ENCODE measurements at regions of chr12 and their contacts with region 1.

Region 1: DNA sequence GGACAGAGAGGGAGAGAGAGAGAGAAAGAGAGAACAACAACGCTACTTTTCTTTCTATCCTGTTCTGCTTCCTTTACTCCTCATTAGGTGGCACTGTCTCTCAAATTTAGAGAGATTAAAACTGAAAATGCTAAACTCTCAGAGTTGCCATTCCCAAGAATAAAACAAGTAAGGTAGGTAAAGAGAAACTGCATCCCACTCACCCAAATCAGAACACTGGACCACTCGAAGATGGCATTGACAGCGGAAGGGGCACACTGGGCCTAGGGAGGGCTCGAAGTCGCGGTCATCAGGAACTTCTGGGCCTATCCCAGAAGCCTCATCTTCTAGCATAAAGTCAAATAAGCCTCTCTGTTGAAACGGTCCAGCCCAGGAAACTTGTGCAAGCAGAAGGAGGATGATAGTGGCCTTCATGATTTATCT is 4.5 kb downstream of the DCN start:
- DNase-seq: no peak
- ATAC-seq: peak; percentile 29

Region 2: GRCh38 chr12:91250273-91250665 is 72.1 kb after region 1 on chr12:
- intact Hi-C with region 1: loop called (anchors 5 kb)
- DNase-seq: no peak
- ATAC-seq: peak; percentile 95

Region 3: GRCh38 chr12:91274916-91275315 is 96.8 kb after region 1 on chr12:
- intact Hi-C with region 1: loop called (anchors 5 kb)
- DNase-seq: no peak
- ATAC-seq: peak; percentile 45

Region 4: DNA sequence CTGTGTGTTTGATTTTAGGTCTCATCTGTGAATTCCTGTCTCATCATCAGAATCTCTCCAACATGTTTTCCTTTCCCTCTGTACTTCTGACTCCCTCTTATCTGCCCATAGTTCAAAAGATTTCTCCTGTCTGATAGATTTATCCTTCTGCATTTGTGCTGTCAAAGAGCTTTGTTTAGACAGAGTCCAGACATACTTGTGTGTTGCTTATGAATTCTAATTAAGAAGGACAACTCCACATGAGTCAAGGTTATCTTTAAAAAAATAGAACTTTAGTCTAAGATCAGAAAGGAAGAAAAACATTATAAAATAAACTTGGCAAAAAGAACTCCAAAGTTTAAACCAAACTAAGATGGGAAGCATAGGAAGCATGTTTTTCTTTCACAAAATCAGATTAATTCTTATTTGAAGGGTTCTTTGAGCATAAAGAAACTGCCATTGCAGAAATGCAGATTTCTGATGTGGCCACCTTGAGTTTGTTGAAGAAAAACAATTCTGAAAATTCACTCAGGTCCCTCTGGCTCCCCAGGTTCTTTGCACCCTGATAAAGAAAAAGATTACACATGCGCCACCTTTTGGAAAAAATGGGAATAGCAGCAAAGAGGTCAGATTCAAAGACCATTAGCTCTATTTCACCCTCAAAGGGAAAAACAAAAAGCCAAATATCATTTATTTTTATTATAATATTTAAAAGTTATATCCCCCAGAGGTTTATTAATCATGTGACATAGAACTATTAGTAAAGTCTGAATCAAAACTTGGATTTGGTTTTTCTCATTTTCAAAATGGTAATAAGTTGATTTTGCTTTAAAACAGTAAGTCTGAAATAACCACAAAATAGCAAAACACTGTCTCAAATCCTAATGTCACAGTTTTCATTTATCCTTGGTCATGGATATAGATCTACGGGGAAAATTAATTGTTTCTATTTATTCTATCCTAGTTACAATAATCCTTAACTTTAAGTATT is 148.2 kb after region 1 on chr12:
- intact Hi-C with region 1: loop called (anchors 2 kb)
- DNase-seq: no peak
- ATAC-seq: peak; percentile 59